Ovary (tissue), 10 donors: ENCODE measurements at regions of chr9 and their contacts with region 1.

Region 1: DNA sequence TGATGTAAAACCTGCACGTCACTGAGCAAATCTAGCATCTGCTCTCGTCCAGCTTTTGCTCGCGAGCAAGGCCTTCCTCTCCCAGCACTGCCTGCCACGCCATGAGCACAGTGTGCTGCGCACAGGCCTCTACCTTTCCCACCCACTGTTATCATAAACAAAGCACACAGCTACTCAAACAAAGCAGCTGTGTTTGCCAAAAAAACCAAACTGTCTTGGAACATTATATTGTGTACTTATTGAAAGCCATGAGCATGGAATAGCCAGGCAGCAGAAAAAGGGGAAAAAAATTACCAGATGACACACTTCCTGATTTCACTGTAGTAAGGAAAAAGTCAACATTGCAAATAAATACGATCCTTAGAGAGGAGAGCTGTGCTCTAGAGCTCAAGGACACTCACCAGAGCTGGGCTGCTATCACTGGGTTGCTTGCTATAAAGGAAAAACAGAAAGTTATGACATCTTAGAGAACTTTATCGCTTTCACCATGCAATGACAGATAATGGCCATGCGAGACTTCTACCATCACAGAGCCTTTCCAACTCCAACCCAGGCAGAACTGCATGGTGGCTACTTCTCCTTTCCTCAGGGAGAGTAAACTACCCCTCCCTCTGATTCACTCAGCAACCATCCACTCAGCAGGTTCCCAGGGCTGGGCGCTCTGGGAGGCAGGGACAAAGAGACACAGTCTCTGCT is 69.6 kb downstream of the EPB41L4B start:
- DNase-seq: peak; percentile 43 to 77 (median 64)
- H3K4me3 ChIP-seq: no peak overlapping the region
- H3K27ac ChIP-seq: peak overlapping the region; percentile 70 to 88
- H3K4me1 ChIP-seq: peaks cover 23% of the 10 kb centered on the region
- H3K27me3 ChIP-seq: no peaks in the 10 kb centered on the region
- CTCF ChIP-seq: no peak
- EP300 ChIP-seq: no peak
- POLR2A ChIP-seq: no peak

Region 2: GRCh38 chr9:109311731-109312130 is 60.5 kb after region 1 on chr9:
- intact Hi-C with region 1: loop called in 3 of 4 experiments (anchors 5 kb)
- DNase-seq: no peak
- H3K4me3 ChIP-seq: no peak overlapping the region
- H3K27ac ChIP-seq: no peak overlapping the region
- H3K4me1 ChIP-seq: peaks cover 12% of the 10 kb centered on the region
- H3K27me3 ChIP-seq: no peaks in the 10 kb centered on the region
- CTCF ChIP-seq: no peak
- EP300 ChIP-seq: no peak
- POLR2A ChIP-seq: no peak